Caco-2 (cell line): ENCODE measurements at regions of chr5 and their contacts with region 1.

Region 1: DNA sequence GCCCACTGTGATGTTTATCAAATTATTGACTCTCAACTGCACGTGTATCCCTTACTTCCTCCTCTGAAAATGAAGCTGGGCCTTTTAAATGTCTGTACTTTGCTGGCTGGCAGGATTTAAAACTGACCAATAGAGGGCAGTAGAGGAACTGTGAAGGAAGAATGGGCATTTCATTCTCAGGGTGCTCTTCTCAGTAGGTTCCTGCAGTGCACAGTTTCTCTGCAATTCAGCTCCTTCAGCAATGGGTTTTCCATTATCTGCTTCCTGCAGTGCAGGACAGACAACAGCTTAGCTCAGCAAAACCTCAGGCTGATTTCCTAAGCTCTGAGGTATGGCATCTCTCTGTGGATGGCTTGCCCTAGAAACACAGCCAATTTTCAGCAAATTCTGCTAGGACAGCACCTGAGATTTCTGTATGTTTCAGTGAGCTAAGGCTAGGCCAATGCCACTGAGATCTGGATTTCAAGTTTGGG is 298.4 kb upstream of the PRDM9 start:
- DNase-seq: peak; percentile 37 to 57
- H3K4me3 ChIP-seq: no peak overlapping the region
- H3K4me3 Mint-ChIP-seq: no peak overlapping the region
- H3K27ac Mint-ChIP-seq: no peak overlapping the region
- H3K4me1 ChIP-seq: no peaks in the 10 kb centered on the region
- H3K4me1 Mint-ChIP-seq: peaks cover 6% of the 10 kb centered on the region
- H3K27me3 ChIP-seq: no peaks in the 10 kb centered on the region
- H3K27me3 Mint-ChIP-seq: no peaks in the 10 kb centered on the region
- CTCF ChIP-seq: peak; percentile 55 to 64

Region 2: GRCh38 chr5:23303433-23303832 is 94.4 kb after region 1 on chr5:
- CTCF ChIA-PET with region 1: no interaction called
- POLR2A ChIA-PET with region 1: no interaction called
- intact Hi-C with region 1: loop called (anchors 10 kb)
- DNase-seq: no peak
- H3K4me3 ChIP-seq: no peak overlapping the region
- H3K4me3 Mint-ChIP-seq: no peak overlapping the region
- H3K27ac Mint-ChIP-seq: no peak overlapping the region
- H3K4me1 ChIP-seq: no peaks in the 10 kb centered on the region
- H3K4me1 Mint-ChIP-seq: no peaks in the 10 kb centered on the region
- H3K27me3 ChIP-seq: no peaks in the 10 kb centered on the region
- H3K27me3 Mint-ChIP-seq: no peaks in the 10 kb centered on the region
- CTCF ChIP-seq: no peak

Region 3: GRCh38 chr5:23332650-23333251 is 123.8 kb after region 1 on chr5:
- CTCF ChIA-PET with region 1: no interaction called
- POLR2A ChIA-PET with region 1: no interaction called
- intact Hi-C with region 1: loop called (anchors 5 kb)
- DNase-seq: no peak
- H3K4me3 ChIP-seq: no peak overlapping the region
- H3K4me3 Mint-ChIP-seq: no peak overlapping the region
- H3K27ac Mint-ChIP-seq: no peak overlapping the region
- H3K4me1 ChIP-seq: no peaks in the 10 kb centered on the region
- H3K4me1 Mint-ChIP-seq: no peaks in the 10 kb centered on the region
- H3K27me3 ChIP-seq: no peaks in the 10 kb centered on the region
- H3K27me3 Mint-ChIP-seq: no peaks in the 10 kb centered on the region
- CTCF ChIP-seq: peak in 1 of 2 experiments; percentile 21

Region 4: DNA sequence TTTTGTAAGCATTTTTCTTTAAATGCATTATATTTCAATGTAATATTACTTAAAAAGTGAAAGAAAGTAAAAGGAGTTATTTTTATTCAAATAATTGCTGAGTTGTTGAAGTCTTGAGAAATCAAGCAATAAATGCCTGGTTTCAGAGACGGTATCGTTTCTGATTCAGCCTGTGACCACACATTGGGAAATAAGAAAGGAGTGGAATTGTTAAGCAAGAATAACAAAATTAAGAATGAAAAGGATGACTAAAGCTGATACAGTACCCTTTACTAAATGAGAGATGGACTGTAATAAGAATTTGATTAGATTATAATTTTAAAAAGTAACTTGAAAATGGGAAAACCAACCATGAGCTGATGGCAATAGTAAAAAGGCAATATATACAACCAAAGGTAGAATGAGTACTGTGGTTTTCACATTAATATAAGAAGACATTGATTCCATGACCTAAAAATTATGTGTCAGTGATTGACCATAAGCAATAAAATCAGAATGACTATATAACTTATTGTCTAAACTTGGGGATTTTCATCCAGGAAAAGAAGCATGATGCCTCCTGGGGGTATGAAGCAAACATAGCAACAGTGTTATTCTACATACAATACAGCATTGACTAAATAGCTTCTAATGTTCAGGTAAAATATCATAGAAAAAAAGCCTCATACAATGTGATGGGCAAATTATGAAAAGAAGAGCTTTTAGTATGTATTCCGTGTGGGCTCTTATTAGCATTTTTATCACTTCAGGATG is 196.5 kb after region 1 on chr5:
- CTCF ChIA-PET with region 1: no interaction called
- POLR2A ChIA-PET with region 1: no interaction called
- intact Hi-C with region 1: loop called (anchors 5 kb)
- DNase-seq: no peak
- H3K4me3 ChIP-seq: no peak overlapping the region
- H3K4me3 Mint-ChIP-seq: no peak overlapping the region
- H3K27ac Mint-ChIP-seq: no peak overlapping the region
- H3K4me1 ChIP-seq: no peaks in the 10 kb centered on the region
- H3K4me1 Mint-ChIP-seq: no peaks in the 10 kb centered on the region
- H3K27me3 ChIP-seq: no peaks in the 10 kb centered on the region
- H3K27me3 Mint-ChIP-seq: no peaks in the 10 kb centered on the region
- CTCF ChIP-seq: no peak

Region 5: DNA sequence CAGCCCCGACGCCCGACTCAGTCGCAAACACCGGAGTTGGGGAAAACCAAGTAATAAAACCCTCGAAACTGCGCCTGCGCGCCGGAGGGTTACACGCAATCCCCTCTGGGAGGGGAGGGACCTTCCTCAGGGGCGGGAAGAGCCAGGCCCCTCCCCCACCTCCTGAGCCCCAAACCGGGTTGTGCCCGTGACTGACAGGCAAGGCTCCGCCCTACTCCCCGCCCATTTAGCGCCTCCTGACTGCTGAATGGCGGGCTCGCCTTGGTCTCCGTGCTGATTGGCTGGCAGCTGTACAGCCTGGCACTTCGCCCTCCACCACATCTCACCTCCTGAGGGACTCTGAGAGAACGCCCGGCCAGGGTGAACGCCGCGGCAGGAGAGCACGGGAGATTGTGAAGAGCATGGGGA is 298.3 kb after region 1 on chr5 and contains the start of gene PRDM9:
- CTCF ChIA-PET with region 1: no interaction called
- POLR2A ChIA-PET with region 1: no interaction called
- intact Hi-C with region 1: loop called (anchors 10 kb)
- DNase-seq: no peak
- H3K4me3 ChIP-seq: no peak within 1 kb of the TSS
- H3K4me3 Mint-ChIP-seq: no peak within 1 kb of the TSS
- H3K27ac Mint-ChIP-seq: no peak within 1 kb of the TSS
- H3K4me1 ChIP-seq: no peaks in the 10 kb centered on the region
- H3K4me1 Mint-ChIP-seq: no peaks in the 10 kb centered on the region
- H3K27me3 ChIP-seq: no peaks in the 10 kb centered on the region
- H3K27me3 Mint-ChIP-seq: no peaks in the 10 kb centered on the region
- CTCF ChIP-seq: no peak
- total RNA-seq, gene PRDM9: not detected in 2 replicates